Caco-2 (cell line): ENCODE measurements at regions of chrX and their contacts with region 1.

Region 1: DNA sequence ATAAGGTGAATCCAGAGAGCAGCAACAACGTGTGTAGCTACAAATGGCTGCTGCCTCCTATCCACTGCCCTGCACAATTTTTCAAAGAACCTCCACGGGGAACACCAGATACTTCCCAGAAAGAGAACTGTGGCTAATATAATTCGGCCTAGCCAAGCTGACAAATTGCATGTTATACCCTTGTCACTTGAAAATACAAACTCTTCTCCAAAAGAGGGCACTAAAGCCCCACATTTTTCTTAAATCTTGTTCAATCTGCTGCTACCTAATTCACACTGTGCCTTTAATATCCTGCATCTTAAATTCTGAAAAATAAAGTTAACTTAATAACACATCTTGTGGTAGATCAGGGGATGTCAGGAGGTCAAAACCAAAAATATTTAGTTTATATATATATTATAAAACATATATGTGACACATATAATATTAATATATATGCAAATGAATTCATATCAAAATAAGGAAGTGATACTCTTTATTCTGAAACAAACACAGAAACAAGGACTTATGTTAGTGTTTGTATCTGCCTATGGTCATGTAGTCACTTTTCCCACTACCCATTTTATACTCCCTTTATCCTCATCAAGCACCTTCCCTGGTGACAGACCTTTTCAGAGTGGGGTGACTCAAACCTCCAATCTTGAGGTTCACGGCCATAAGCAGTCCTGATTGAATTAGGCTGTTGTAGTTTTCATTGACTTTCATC is 24.1 kb downstream of the CT45A1 start:
- DNase-seq: no peak
- H3K4me3 ChIP-seq: no peak overlapping the region
- H3K4me3 Mint-ChIP-seq: no peak overlapping the region
- H3K27ac Mint-ChIP-seq: no peak overlapping the region
- H3K4me1 ChIP-seq: no peaks in the 10 kb centered on the region
- H3K4me1 Mint-ChIP-seq: no peaks in the 10 kb centered on the region
- H3K27me3 ChIP-seq: no peaks in the 10 kb centered on the region
- H3K27me3 Mint-ChIP-seq: no peaks in the 10 kb centered on the region
- CTCF ChIP-seq: no peak

Region 2: GRCh38 chrX:135931644-135932487 is 194.3 kb after region 1 on chrX:
- CTCF ChIA-PET with region 1: no interaction called
- POLR2A ChIA-PET with region 1: no interaction called
- intact Hi-C with region 1: loop called (anchors 5 kb)
- DNase-seq: peak; percentile 42 to 62
- H3K4me3 ChIP-seq: no peak overlapping the region
- H3K4me3 Mint-ChIP-seq: no peak overlapping the region
- H3K27ac Mint-ChIP-seq: no peak overlapping the region
- H3K4me1 ChIP-seq: no peaks in the 10 kb centered on the region
- H3K4me1 Mint-ChIP-seq: no peaks in the 10 kb centered on the region
- H3K27me3 ChIP-seq: no peaks in the 10 kb centered on the region
- H3K27me3 Mint-ChIP-seq: peaks cover 4% of the 10 kb centered on the region
- CTCF ChIP-seq: peak; percentile 46 to 60

Region 3: GRCh38 chrX:136147315-136147901 is 409.9 kb after region 1 on chrX and contains the start of gene FHL1:
- CTCF ChIA-PET with region 1: no interaction called
- POLR2A ChIA-PET with region 1: no interaction called
- intact Hi-C with region 1: no loop called
- DNase-seq: peak in 1 of 2 experiments; percentile 3
- H3K4me3 ChIP-seq: peak within 1 kb of the TSS; percentile 32
- H3K4me3 Mint-ChIP-seq: peak within 1 kb of the TSS; percentile 55
- H3K27ac Mint-ChIP-seq: no peak within 1 kb of the TSS
- H3K4me1 ChIP-seq: no peaks in the 10 kb centered on the region
- H3K4me1 Mint-ChIP-seq: peaks cover 5% of the 10 kb centered on the region
- H3K27me3 ChIP-seq: no peaks in the 10 kb centered on the region; the same call in 1 of the 2 replicates
- H3K27me3 Mint-ChIP-seq: peaks cover 18% of the 10 kb centered on the region
- CTCF ChIP-seq: no peak
- total RNA-seq, gene FHL1: 0.16 TPM in 1 of 2 replicates, not detected in the other